ENCODE measurements at regions of chr5 and their contacts with region 1.

Region 1: DNA sequence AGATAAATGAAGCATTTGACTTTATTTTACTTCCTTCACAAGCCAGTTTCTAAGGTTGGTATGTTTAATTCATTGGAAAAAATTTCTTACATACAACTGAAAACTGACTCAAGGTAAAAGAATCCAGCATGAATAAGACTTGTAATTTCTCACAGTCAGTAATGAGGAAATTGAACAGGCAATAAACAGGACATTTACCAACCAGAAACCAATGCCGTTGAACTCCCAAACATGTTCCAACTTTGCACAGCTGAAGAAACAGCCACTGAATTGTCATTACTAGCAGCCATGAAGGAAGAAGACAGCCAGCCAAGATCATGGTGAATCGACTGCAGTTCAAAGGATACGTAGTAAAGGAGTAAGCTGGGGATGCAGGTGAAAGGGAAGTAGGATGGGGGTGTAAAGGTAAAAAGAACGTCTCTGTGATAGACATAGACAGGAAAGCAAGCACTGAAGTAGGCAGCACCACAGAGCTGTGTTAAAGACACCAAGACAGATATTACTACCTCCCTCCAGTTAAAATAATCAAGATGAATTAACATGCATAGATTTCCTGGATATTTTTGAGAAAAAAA is 21.3 kb upstream of the SLC12A2 start:
- DNase-seq: no peak
- CTCF ChIP-seq: no peak

Region 2: DNA sequence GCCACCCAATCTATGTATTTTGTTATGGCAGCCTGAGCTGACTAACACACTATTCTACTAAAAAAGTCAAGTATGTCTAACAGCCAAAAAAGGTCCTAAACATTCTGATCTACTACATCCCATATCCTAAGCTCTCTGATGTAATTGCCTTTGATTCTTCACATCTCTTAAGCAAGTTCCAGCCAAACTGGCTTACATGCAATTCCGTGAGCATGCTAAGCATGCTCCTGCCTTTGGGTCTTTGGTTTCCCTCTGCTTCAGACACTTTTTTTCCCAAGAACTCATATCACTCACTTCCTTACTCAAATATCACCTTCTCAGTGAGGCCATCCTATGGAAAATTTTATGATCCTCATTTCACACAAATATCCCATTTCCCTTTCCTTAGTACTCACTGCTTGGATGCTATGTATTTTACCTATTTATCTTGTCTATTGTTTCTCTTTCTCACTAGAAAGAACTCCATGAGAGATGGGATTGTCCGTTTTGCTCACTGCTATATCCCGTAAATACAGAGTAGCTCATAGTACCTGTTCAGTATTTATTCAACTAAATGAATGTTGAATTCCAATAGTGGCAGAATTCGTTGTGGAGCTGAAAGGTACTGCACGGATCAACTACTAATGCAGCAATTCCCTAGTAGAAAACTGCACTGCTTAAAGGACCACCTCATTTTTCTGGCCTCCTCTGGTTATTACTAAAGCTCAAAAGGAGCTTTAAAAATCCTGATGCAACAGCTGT is 19.0 kb after region 1 on chr5:
- CTCF ChIA-PET with region 1: interaction called, 23 read pairs
- POLR2A ChIA-PET with region 1: no interaction called
- DNase-seq: no peak
- CTCF ChIP-seq: no peak

Measured in GM10248 (cell line).